ENCODE measurements at regions of chr12 and their contacts with region 1.

Region 1: DNA sequence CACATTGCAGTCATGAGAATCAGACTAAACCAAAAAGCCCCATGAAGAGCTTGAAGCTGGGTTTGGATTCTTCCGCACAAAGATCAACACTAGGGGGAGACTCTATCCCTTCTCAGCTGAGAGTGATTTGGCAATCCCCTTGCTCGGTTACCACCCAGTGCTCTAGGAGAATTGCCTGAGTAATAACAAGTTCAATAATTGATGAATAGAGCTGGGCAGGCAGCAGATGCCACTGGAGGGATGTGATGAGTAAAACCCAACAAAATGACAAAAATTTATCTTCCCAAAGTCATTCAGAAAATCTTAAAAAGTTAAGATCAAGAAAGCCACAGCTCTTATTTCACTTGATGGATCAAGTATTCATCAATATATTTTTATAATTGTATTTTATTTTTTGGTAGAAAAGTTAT is 185.6 kb upstream of the ARID2 start:
- DNase-seq: peak; percentile 62
- H3K4me3 ChIP-seq: no peak overlapping the region
- H3K27ac ChIP-seq: no peak overlapping the region
- H3K27me3 ChIP-seq: no peaks in the 10 kb centered on the region
- CTCF ChIP-seq: peak; percentile 93

Region 2: DNA sequence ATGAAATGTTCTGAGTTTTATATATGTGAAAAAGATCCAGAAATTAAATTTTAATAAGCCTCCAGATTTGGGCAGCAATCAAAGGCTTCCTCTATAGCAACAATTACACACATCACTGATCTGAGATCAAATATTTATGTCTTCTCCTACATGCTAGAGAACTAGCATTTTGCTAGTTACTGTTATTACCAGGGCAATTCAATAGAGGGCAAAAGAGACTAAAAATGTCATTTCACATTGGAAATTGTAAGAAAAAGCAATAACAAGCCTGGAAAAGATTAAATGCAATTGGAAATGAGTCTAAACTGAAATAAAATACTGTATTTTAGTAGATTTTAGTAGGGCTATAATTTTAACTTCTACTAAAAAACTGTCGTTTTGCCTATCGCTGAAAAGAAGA is 360.7 kb before region 1 on chr12:
- CTCF ChIA-PET with region 1: interaction called, 14 read pairs
- POLR2A ChIA-PET with region 1: no interaction called
- DNase-seq: no peak
- H3K4me3 ChIP-seq: no peak overlapping the region
- H3K27ac ChIP-seq: no peak overlapping the region
- H3K27me3 ChIP-seq: no peaks in the 10 kb centered on the region
- CTCF ChIP-seq: peak; percentile 58

Region 3: GRCh38 chr12:45446008-45446407 is 97.9 kb before region 1 on chr12:
- CTCF ChIA-PET with region 1: no interaction called
- POLR2A ChIA-PET with region 1: no interaction called
- DNase-seq: no peak
- H3K4me3 ChIP-seq: no peak overlapping the region
- H3K27ac ChIP-seq: no peak overlapping the region
- H3K27me3 ChIP-seq: peaks cover 3% of the 10 kb centered on the region
- CTCF ChIP-seq: no peak

Region 4: GRCh38 chr12:45557016-45557415 is 13.1 kb after region 1 on chr12:
- CTCF ChIA-PET with region 1: interaction called, 11 read pairs
- POLR2A ChIA-PET with region 1: no interaction called
- DNase-seq: no peak
- H3K4me3 ChIP-seq: no peak overlapping the region
- H3K27ac ChIP-seq: no peak overlapping the region
- H3K27me3 ChIP-seq: peaks cover 4% of the 10 kb centered on the region
- CTCF ChIP-seq: no peak

Region 5: DNA sequence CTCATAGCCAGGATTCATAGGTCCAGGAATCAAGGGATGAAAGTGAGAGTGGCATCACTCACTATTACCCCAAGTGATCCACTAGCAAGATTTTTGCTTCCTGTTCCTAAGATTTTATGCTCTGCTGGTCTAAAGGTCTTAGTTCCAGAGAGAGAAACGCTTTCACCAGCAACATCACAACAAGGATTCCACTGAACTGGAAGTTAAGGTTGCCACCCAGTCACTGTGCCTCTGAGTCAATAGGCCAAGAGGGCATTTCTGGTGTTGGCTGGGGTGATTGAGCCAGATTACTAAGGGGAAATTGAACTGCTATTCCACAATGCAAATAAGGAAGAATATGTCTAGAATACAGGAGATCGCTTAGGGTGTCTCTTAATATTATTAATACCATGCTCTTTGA is 43.1 kb after region 1 on chr12:
- CTCF ChIA-PET with region 1: no interaction called
- POLR2A ChIA-PET with region 1: no interaction called
- DNase-seq: no peak
- H3K4me3 ChIP-seq: no peak overlapping the region
- H3K27ac ChIP-seq: no peak overlapping the region
- H3K27me3 ChIP-seq: no peaks in the 10 kb centered on the region
- CTCF ChIP-seq: no peak

Region 6: DNA sequence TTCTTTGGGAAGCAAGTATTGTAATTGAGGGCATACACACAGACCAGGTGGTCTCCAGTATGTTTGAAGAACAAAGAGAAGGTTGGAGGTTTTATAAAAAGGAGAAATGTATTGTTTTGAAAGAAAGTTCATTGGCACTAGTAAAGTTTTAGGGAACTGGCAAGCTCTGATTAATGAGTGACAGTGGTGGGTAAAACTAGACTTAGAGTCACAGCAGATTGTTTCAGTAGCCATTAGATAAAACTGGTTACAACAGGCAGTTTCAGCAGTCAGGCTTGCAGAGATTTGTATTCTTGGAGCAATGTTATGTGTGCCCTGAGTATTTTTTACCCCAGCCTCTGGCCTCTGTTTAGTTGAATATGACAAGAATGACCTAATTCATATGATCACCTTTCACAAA is 136.5 kb after region 1 on chr12:
- CTCF ChIA-PET with region 1: interaction called, 10 read pairs
- POLR2A ChIA-PET with region 1: no interaction called
- DNase-seq: no peak
- H3K4me3 ChIP-seq: no peak overlapping the region
- H3K27ac ChIP-seq: no peak overlapping the region
- H3K27me3 ChIP-seq: no peaks in the 10 kb centered on the region
- CTCF ChIP-seq: no peak

Region 7: GRCh38 chr12:45728630-45729232 is 184.8 kb after region 1 on chr12:
- CTCF ChIA-PET with region 1: interaction called, 133 read pairs
- POLR2A ChIA-PET with region 1: interaction called, 5 read pairs
- DNase-seq: peak; percentile 91
- H3K4me3 ChIP-seq: peak overlapping the region; percentile 88
- H3K27ac ChIP-seq: peak overlapping the region; percentile 86
- H3K27me3 ChIP-seq: no peaks in the 10 kb centered on the region
- CTCF ChIP-seq: peak; percentile 81

Region 8: DNA sequence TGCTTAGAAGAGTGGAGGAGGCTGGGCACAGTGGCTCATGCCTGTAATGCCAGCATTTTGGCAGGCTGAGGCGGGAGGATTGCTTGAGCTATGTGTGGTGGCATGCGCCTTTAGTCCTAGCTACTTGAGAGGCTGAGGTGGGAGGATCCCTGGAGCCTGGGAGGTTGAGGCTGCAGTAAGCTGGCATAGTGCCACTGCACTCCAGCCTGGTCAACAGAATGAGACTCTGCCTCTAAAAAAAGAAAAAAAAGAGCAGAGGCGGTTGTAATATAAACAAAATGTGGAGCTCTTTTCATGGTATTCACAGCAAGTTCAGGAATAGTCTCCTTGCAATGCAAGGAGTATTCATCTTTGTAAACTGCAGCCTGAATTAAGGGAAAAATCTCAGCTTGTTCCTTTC is 212.8 kb after region 1 on chr12:
- CTCF ChIA-PET with region 1: interaction called, 18 read pairs
- POLR2A ChIA-PET with region 1: no interaction called
- DNase-seq: peak; percentile 7
- H3K4me3 ChIP-seq: no peak overlapping the region
- H3K27ac ChIP-seq: no peak overlapping the region
- H3K27me3 ChIP-seq: no peaks in the 10 kb centered on the region
- CTCF ChIP-seq: no peak